ENCODE measurements at regions of chr10 and their contacts with region 1.

Region 1: GRCh38 chr10:72364239-72364777 is 9.6 kb upstream of the DNAJB12 start:
- DNase-seq: peak; percentile 92
- ATAC-seq: peak; percentile 96

Region 2: DNA sequence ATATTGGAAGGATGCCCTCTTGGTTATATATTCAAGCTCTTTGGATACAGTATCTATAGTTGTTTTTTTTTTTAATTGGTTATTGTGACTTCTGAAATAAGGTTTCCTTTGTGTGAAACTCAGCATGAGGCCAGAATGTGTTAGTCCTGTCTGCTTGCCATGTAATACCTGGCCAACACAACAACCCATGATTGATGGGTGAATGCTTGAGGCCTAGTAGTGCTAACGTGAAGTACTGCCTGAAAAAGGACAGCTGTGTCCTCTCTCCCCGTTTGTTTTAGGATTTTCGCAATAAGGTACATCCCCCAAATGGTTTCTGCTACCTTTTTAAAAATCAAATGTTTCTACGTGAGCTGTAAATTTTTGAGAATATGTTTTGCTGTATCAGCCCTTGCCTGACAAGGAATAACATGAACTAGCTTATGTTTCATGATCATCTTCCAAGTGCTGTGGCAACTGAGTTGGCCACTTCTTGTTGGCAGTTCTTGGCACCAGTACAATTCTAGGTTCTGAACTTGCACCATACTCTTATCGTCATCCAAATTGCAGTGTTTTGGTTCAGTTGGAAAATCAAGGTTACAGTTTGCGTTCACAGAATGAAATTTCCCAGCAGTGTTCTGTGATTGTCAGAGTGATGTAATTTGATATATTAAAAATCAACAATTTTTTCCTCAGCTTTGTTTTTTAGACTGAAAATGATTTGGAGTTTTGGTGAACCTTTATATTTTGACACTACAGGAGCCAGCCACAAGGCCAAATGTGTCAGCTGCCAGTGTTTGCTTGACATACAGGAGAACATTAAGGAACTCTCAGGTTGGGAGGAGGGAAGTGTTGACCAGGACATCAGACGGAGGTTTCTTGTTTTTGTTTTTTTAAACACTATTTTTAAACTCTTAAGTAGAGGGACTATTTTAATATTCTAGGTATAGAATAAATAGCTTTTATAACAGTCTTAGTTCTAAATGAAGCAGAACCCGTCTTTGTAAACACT is 134.8 kb before region 1 on chr10:
- intact Hi-C with region 1: no loop called
- DNase-seq: no peak
- ATAC-seq: peak; percentile 49

Region 3: GRCh38 chr10:72875250-72876055 is 511.1 kb after region 1 on chr10:
- intact Hi-C with region 1: loop called (anchors 5 kb)
- DNase-seq: no peak
- ATAC-seq: no peak

Region 4: GRCh38 chr10:73167783-73168464 is 803.6 kb after region 1 on chr10 and contains the starts of genes ECD and FAM149B1:
- intact Hi-C with region 1: loop called (anchors 10 kb)
- DNase-seq: peak; percentile 95
- ATAC-seq: peak; percentile 97
- total RNA-seq, gene ECD: 15.3 TPM
- total RNA-seq, gene FAM149B1: 12.9 TPM

Measured in Right ventricle myocardium inferior (tissue), 1 donor.